MCF 10A (cell line): ENCODE measurements at regions of chr1 and their contacts with region 1.

Region 1: GRCh38 chr1:232635778-232636356 is 5.9 kb upstream of the SIPA1L2 start:
- DNase-seq: peak; percentile 81
- H3K4me3 Mint-ChIP-seq: no peak overlapping the region
- H3K27ac Mint-ChIP-seq: no peak overlapping the region
- H3K4me1 Mint-ChIP-seq: peaks cover 6% of the 10 kb centered on the region
- H3K27me3 Mint-ChIP-seq: no peaks in the 10 kb centered on the region
- CTCF ChIP-seq: peak; percentile 76

Region 2: GRCh38 chr1:232684363-232685105 is 48.7 kb after region 1 on chr1:
- CTCF ChIA-PET with region 1: interaction called, 10 read pairs
- POLR2A ChIA-PET with region 1: no interaction called
- intact Hi-C with region 1: no loop called
- DNase-seq: peak; percentile 59
- H3K4me3 Mint-ChIP-seq: no peak overlapping the region
- H3K27ac Mint-ChIP-seq: no peak overlapping the region
- H3K4me1 Mint-ChIP-seq: peaks cover 9% of the 10 kb centered on the region
- H3K27me3 Mint-ChIP-seq: no peaks in the 10 kb centered on the region
- CTCF ChIP-seq: no peak

Region 3: GRCh38 chr1:232793944-232794343 is 158.1 kb after region 1 on chr1:
- CTCF ChIA-PET with region 1: interaction called, 32 read pairs
- POLR2A ChIA-PET with region 1: interaction called, 5 read pairs
- intact Hi-C with region 1: loop called (anchors 1 kb)
- DNase-seq: peak; percentile 86
- H3K4me3 Mint-ChIP-seq: no peak overlapping the region
- H3K27ac Mint-ChIP-seq: no peak overlapping the region
- H3K4me1 Mint-ChIP-seq: peaks cover 16% of the 10 kb centered on the region
- H3K27me3 Mint-ChIP-seq: no peaks in the 10 kb centered on the region
- CTCF ChIP-seq: peak; percentile 48

Region 4: DNA sequence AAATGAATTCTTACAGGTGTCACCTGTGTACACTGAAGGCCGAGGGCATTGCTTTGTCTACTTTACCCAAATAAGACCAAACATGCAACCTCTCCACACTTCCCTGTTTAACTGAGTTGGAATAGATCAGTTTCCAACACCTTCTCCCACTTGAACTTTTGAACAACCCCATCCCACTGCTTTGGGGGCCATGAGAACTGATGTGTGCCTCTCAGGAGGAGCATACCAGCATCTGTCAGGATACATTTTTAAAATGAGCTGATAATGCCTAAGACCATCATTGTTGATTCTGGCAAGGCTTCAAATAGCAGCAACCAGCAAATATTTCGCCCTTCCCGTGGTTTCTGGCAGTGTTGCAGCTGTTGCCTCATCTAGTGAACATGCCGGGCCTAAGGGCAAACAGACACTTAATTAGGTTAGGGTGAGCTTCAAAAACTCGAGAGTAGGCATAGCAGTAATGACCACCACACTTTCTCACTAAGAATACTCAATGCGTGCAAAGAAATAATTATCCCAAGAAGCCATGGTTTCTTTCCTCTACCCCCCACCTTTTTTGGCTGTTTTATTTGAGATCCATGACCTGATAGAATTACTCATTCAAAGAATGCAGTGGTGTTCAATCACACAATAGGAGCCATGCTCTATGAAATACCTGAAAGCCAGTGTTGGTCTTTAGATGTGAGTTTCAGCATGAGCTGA is 233.1 kb after region 1 on chr1:
- CTCF ChIA-PET with region 1: interaction called, 4 read pairs
- POLR2A ChIA-PET with region 1: no interaction called
- intact Hi-C with region 1: loop called (anchors 1 kb)
- DNase-seq: peak; percentile 100
- H3K4me3 Mint-ChIP-seq: no peak overlapping the region
- H3K27ac Mint-ChIP-seq: peak overlapping the region; percentile 79
- H3K4me1 Mint-ChIP-seq: peaks cover 21% of the 10 kb centered on the region
- H3K27me3 Mint-ChIP-seq: no peaks in the 10 kb centered on the region
- CTCF ChIP-seq: no peak

Region 5: GRCh38 chr1:233240829-233241682 is 605.2 kb after region 1 on chr1:
- CTCF ChIA-PET with region 1: interaction called, 12 read pairs
- POLR2A ChIA-PET with region 1: no interaction called
- intact Hi-C with region 1: loop called (anchors 1 kb)
- DNase-seq: peak; percentile 56
- H3K4me3 Mint-ChIP-seq: no peak overlapping the region
- H3K27ac Mint-ChIP-seq: peak overlapping the region; percentile 32
- H3K4me1 Mint-ChIP-seq: peaks cover 9% of the 10 kb centered on the region
- H3K27me3 Mint-ChIP-seq: no peaks in the 10 kb centered on the region
- CTCF ChIP-seq: peak; percentile 90